ENCODE measurements at regions of chr3 and their contacts with region 1.

Region 1: GRCh38 chr3:101685870-101686412 is 577 bp downstream of the RPL24 start:
- DNase-seq: no peak
- H3K4me3 ChIP-seq: peak overlapping the region; percentile 93 to 100 (median 98)
- H3K27ac ChIP-seq: peak overlapping the region; percentile 89 to 94
- H3K4me1 ChIP-seq: peaks cover 13 to 33% (median 29%) of the 10 kb centered on the region in 4 experiments
- H3K27me3 ChIP-seq: no peaks in the 10 kb centered on the region

Region 2: DNA sequence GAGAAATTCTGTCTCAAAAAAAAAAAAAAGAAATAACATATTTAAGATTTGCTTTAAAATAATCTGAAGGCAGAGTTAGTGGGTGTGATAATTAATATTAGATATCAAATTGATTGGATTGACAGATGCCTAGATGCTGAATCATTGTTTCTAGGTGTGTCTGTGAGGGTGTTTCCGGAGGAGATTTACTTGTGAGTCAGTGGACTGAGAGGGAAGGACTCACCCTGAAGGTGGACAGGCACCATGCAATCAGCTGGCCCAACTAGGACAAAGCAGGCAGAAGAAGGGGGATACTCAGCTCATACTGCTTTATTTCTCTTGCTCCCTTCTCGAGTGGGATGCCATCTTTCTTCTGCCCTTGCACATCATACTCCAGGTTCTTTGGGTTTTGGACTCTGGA is 17.2 kb after region 1 on chr3:
- CTCF ChIA-PET with region 1: interaction called, 13 read pairs
- POLR2A ChIA-PET with region 1: no interaction called
- DNase-seq: no peak
- H3K4me3 ChIP-seq: no peak overlapping the region
- H3K27ac ChIP-seq: no peak overlapping the region
- H3K4me1 ChIP-seq: no peaks in the 10 kb centered on the region
- H3K27me3 ChIP-seq: no peaks in the 10 kb centered on the region

Region 3: GRCh38 chr3:101724329-101725193 is 38.6 kb after region 1 on chr3 and contains the start of gene CEP97:
- CTCF ChIA-PET with region 1: interaction called, 10 read pairs
- POLR2A ChIA-PET with region 1: interaction called, 4 read pairs
- DNase-seq: peak; percentile 88 to 94 (median 92)
- H3K4me3 ChIP-seq: peak within 1 kb of the TSS; percentile 92 to 99 (median 96)
- H3K27ac ChIP-seq: peak within 1 kb of the TSS; percentile 66 to 86
- H3K4me1 ChIP-seq: peaks cover 5 to 38% (median 21%) of the 10 kb centered on the region in 4 experiments
- H3K27me3 ChIP-seq: no peaks in the 10 kb centered on the region

Measured in common myeloid progenitor, CD34-positive (primary cell).